CD8-positive, alpha-beta T cell (primary cell): ENCODE measurements at regions of chr11 and their contacts with region 1.

Region 1: DNA sequence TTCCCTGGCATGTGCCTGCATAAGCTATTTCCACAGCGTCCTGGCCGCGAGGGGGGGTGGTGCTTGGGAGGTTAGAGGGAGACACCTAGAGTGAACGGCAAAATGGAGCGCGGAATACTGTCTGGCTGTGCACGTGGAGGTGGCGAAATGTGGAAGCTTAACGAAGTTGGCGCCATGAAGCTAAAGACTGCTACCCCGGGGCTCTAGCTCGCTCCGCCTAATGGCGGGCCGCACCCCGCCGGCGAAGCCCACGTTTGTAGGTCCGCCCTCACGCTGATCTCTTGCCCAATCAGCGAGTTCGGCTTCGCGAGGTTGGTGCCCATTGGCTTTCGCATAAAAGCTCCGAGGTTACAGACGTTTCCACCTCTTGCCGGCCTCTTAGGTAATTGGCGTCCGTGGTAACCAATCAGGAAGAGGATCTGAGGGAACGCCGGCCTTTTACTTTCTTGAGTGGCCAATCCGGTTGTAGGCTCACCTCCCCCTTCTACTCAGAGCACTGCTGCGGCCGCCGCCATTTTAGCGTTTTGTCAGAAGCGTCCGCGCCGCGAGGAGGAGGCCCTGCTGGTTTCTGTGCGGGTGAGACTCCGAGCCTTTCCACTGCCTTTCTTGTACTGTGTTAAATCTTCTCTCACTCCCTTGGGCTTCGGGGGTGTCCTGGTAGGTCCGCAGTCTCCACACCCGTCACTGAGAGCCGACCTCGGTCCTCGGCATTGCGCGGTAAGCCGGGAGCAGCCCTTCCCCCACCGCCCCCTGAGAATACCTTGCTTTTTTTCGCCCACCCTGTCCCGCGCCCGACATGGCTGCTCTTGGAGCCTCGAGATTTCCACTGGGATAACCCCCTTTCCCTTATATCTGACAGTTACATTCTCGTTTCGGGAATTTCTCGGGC is at the start of gene RBM4:
- DNase-seq: peak; percentile 92 to 100 (median 94)
- ATAC-seq: peak; percentile 89
- H3K4me3 ChIP-seq: peak within 1 kb of the TSS; percentile 87 to 88
- H3K4me3 Mint-ChIP-seq: peak within 1 kb of the TSS; percentile 98
- H3K27ac ChIP-seq: peak within 1 kb of the TSS; percentile 89 to 92
- H3K27ac Mint-ChIP-seq: peak within 1 kb of the TSS; percentile 97
- H3K4me1 ChIP-seq: peaks cover 53% of the 10 kb centered on the region
- H3K4me1 Mint-ChIP-seq: peaks cover 66% of the 10 kb centered on the region
- H3K27me3 ChIP-seq: no peaks in the 10 kb centered on the region
- H3K27me3 Mint-ChIP-seq: no peaks in the 10 kb centered on the region
- CTCF ChIP-seq: no peak
- total RNA-seq, gene RBM4: 183 to 191 TPM

Region 2: GRCh38 chr11:66282468-66283386 is 355.7 kb before region 1 on chr11:
- CTCF ChIA-PET with region 1: no interaction called
- POLR2A ChIA-PET with region 1: no interaction called
- intact Hi-C with region 1: no loop called
- DNase-seq: peak; percentile 98 to 100 (median 99)
- ATAC-seq: peak; percentile 73
- H3K4me3 ChIP-seq: no peak overlapping the region
- H3K4me3 Mint-ChIP-seq: no peak overlapping the region
- H3K27ac ChIP-seq: peak overlapping the region in 1 of 2 experiments; percentile 59
- H3K27ac Mint-ChIP-seq: peak overlapping the region; percentile 84
- H3K4me1 ChIP-seq: peaks cover 27% of the 10 kb centered on the region
- H3K4me1 Mint-ChIP-seq: peaks cover 45% of the 10 kb centered on the region
- H3K27me3 ChIP-seq: peaks cover 0 to 5% of the 10 kb centered on the region in 2 experiments
- H3K27me3 Mint-ChIP-seq: no peaks in the 10 kb centered on the region
- CTCF ChIP-seq: peak; percentile 89

Region 3: DNA sequence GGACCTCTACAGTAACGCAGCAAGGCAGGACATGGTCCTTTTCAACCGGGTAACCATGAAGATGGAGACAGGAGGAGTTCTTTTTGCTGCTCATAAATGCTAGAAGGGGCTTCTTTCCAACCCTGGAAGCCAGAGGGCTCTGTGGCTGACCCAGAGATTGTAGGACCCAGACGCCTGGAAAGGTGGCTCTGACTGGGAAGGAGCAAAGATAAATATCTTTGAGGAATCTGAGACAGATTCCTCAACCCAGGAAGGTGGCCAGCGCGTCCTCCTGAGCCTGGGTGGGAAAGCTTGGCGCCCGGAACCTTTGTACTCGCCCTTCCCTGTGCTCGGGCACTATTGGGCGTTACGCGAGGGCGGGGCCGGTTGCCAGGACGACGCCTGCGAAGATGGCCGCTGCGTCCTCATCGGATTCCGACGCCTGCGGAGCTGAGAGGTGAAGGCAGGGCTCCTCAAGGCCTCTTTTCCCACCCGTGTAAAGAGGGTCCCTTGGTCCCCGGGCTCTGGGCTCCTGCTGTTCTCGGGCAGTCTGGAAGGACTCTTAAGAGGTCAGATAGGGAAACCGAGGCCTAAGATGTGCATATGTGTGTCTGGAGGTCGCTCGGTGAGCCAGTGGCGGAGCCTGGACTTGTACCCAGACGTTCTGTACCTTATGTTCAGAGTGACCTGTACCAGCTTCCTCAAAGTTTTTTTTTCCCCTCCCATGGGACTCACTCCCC is 128.0 kb before region 1 on chr11 and contains the start of gene BBS1:
- CTCF ChIA-PET with region 1: no interaction called
- POLR2A ChIA-PET with region 1: no interaction called
- intact Hi-C with region 1: loop called in 1 of 2 experiments (anchors 1 kb)
- DNase-seq: peak; percentile 62 to 91 (median 84)
- ATAC-seq: peak; percentile 98
- H3K4me3 ChIP-seq: peak within 1 kb of the TSS; percentile 68 to 81
- H3K4me3 Mint-ChIP-seq: peak within 1 kb of the TSS; percentile 88
- H3K27ac ChIP-seq: peak within 1 kb of the TSS; percentile 57 to 62
- H3K27ac Mint-ChIP-seq: peak within 1 kb of the TSS; percentile 22
- H3K4me1 ChIP-seq: peaks cover 15% of the 10 kb centered on the region
- H3K4me1 Mint-ChIP-seq: peaks cover 13% of the 10 kb centered on the region
- H3K27me3 ChIP-seq: no peaks in the 10 kb centered on the region
- H3K27me3 Mint-ChIP-seq: no peaks in the 10 kb centered on the region
- CTCF ChIP-seq: no peak
- total RNA-seq, gene BBS1: 10.8 to 13.5 TPM

Region 4: GRCh38 chr11:66579017-66579606 is 59.3 kb before region 1 on chr11:
- CTCF ChIA-PET with region 1: interaction called, 5 read pairs
- POLR2A ChIA-PET with region 1: interaction called, 3 read pairs
- intact Hi-C with region 1: loop called in 1 of 2 experiments (anchors 5 kb)
- DNase-seq: peak; percentile 43 to 86 (median 80)
- ATAC-seq: peak; percentile 90
- H3K4me3 ChIP-seq: no peak overlapping the region
- H3K4me3 Mint-ChIP-seq: no peak overlapping the region
- H3K27ac ChIP-seq: no peak overlapping the region
- H3K27ac Mint-ChIP-seq: no peak overlapping the region
- H3K4me1 ChIP-seq: no peaks in the 10 kb centered on the region
- H3K4me1 Mint-ChIP-seq: peaks cover 6% of the 10 kb centered on the region
- H3K27me3 ChIP-seq: no peaks in the 10 kb centered on the region
- H3K27me3 Mint-ChIP-seq: peaks cover 2% of the 10 kb centered on the region
- CTCF ChIP-seq: peak; percentile 86

Region 5: GRCh38 chr11:66625041-66625751 is 13.2 kb before region 1 on chr11:
- CTCF ChIA-PET with region 1: interaction called, 27 read pairs
- POLR2A ChIA-PET with region 1: interaction called, 127 read pairs
- intact Hi-C with region 1: no loop called
- DNase-seq: no peak
- ATAC-seq: no peak
- H3K4me3 ChIP-seq: no peak overlapping the region
- H3K4me3 Mint-ChIP-seq: no peak overlapping the region
- H3K27ac ChIP-seq: no peak overlapping the region
- H3K27ac Mint-ChIP-seq: peak overlapping the region; percentile 41
- H3K4me1 ChIP-seq: peaks cover 65% of the 10 kb centered on the region
- H3K4me1 Mint-ChIP-seq: peaks cover 73% of the 10 kb centered on the region
- H3K27me3 ChIP-seq: no peaks in the 10 kb centered on the region
- H3K27me3 Mint-ChIP-seq: no peaks in the 10 kb centered on the region
- CTCF ChIP-seq: no peak

Region 6: GRCh38 chr11:66842896-66843775 is 204.7 kb after region 1 on chr11 and contains the start of gene RCE1:
- CTCF ChIA-PET with region 1: no interaction called
- POLR2A ChIA-PET with region 1: interaction called, 5 read pairs
- intact Hi-C with region 1: loop called in 1 of 2 experiments (anchors 1 kb)
- DNase-seq: peak; percentile 85 to 96 (median 89)
- ATAC-seq: peak; percentile 88
- H3K4me3 ChIP-seq: peak within 1 kb of the TSS; percentile 68 to 91
- H3K4me3 Mint-ChIP-seq: peak within 1 kb of the TSS; percentile 86
- H3K27ac ChIP-seq: peak within 1 kb of the TSS; percentile 99 to 100
- H3K27ac Mint-ChIP-seq: peak within 1 kb of the TSS; percentile 93
- H3K4me1 ChIP-seq: peaks cover 47% of the 10 kb centered on the region
- H3K4me1 Mint-ChIP-seq: peaks cover 51% of the 10 kb centered on the region
- H3K27me3 ChIP-seq: no peaks in the 10 kb centered on the region
- H3K27me3 Mint-ChIP-seq: no peaks in the 10 kb centered on the region
- CTCF ChIP-seq: no peak
- total RNA-seq, gene RCE1: 68.9 to 72.2 TPM

Region 7: GRCh38 chr11:66906061-66906735 is 267.8 kb after region 1 on chr11:
- CTCF ChIA-PET with region 1: no interaction called
- POLR2A ChIA-PET with region 1: no interaction called
- intact Hi-C with region 1: no loop called
- DNase-seq: no peak
- ATAC-seq: no peak
- H3K4me3 ChIP-seq: no peak overlapping the region
- H3K4me3 Mint-ChIP-seq: no peak overlapping the region
- H3K27ac ChIP-seq: no peak overlapping the region
- H3K27ac Mint-ChIP-seq: no peak overlapping the region
- H3K4me1 ChIP-seq: no peaks in the 10 kb centered on the region
- H3K4me1 Mint-ChIP-seq: no peaks in the 10 kb centered on the region
- H3K27me3 ChIP-seq: no peaks in the 10 kb centered on the region
- H3K27me3 Mint-ChIP-seq: no peaks in the 10 kb centered on the region
- CTCF ChIP-seq: no peak